Left colon (tissue), 2 donors: ENCODE measurements at regions of chr14 and their contacts with region 1.

Region 1: DNA sequence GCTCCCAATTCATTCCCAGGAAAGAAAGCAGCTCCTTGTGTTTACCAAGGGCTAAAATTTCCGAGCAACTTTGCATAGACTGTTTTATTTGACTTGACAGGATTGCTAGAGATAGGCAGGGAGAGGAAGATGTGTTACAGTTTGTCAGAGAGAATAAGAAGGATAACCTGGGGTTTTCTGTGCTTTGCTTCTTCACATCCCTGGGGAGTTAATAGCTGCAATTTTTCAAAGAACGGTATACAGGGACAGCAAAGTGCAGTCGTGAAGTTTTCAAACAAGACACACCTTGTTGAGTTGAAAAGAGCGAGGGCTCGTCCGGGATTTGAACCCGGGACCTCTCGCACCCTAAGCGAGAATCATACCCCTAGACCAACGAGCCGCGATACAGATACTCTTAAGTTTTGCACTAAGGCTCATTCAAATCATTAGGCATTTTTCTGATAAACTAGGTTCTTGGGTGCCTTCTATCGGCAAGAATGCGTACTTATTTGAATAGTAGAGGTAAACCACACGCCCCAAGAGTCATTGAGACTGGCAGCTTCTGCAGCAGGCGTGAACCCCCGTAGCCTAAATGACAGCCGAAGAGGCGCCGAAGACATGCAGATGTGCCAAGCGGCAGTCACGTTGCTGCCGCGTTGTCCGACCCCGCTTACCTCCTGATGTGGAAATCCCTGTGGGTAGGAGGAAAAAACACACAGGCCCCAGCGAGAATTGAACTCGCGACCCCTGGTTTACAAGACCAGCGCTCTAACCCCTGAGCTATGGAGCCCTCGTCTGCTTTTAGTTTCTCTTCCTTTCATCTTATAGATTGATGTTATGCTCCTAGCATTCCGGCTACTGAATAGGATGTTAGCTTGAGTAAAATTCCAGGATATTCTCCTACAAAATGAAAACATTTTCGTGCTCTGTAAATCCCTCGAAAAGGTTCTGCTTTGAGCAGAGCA is 22.2 kb upstream of the RNASE12 start:
- DNase-seq: peak; percentile 76
- ATAC-seq: peak; percentile 72

Region 2: GRCh38 chr14:20327005-20327869 is 286.1 kb before region 1 on chr14:
- intact Hi-C with region 1: loop called in 1 of 2 experiments (anchors 5 kb)
- DNase-seq: no peak
- ATAC-seq: peak; percentile 65

Region 3: GRCh38 chr14:20413045-20413799 is 200.1 kb before region 1 on chr14 and contains the start of gene TEP1:
- intact Hi-C with region 1: loop called in 1 of 2 experiments (anchors 10 kb)
- DNase-seq: peak; percentile 92 to 95
- ATAC-seq: peak; percentile 76
- total RNA-seq, gene TEP1: 72.1 to 74.3 TPM

Region 4: DNA sequence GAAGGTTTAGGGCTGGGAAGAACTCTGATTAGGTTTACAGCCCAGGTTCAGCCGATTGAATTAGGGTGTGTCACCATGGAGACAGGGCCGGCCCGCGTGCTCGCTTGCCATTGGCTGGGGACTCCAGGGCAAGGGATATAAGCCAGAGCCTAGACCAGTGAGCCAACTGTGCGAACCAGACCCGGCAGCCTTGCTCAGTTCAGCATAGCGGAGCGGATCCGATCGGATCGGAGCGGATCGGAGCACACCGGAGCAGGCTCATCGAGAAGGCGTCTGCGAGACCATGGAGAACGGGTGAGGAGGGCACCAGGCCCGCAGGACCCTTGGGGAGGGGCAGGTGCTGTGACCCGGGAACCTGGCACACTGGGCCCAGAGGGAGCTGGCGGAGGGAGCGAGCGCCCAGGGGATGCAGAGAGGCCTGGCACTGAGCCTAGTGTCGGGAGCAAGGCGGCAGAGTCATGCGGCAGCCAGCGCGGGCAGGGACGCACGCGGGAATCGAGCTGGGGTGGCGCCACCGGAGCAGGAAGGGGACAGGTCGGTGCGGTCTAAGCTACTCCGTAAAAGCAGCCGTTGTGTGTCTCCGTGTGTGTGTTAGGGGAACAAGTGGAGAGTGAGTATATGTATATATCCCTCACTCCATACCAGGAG is 144.0 kb before region 1 on chr14 and contains the start of gene PNP:
- intact Hi-C with region 1: loop called in 1 of 2 experiments (anchors 5 kb)
- DNase-seq: peak; percentile 93 to 96
- ATAC-seq: peak; percentile 91
- total RNA-seq, gene PNP: 66.9 to 93.6 TPM

Region 5: DNA sequence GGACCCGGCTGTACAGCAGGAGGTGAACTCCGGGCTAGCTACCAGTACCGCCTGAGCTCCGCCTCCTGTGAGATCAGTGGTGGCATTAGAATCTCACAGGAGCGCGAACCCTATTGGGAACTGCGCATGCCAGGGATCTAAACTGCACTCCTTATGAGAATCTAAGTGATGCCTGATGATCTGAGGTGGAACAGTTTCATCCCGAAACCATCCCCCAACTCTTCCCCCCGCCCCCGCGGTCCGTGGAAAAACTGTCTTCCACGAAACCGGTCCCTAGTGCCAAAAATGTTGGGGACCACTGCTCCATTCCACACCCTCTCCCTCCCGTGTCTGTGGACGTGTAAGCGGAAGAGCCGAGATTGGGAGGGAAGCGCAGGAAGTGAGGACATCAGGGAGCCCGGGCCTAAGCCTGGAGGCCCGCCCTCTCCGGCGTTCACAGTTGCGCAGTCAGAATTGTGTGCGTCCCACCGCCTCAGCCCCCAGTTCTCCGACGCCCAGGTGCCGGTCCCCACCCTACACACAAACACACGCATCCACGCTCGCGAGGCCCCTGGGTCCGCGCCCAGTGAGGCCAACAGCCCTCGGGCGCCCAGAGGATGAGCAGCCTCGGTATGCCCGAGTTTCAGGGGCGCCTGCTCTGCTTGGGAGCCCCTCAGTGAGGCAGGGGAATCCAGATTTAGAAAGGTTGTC is 69.2 kb after region 1 on chr14:
- intact Hi-C with region 1: loop called in 1 of 2 experiments (anchors 10 kb)
- DNase-seq: peak; percentile 88 to 91
- ATAC-seq: peak; percentile 54

Region 6: GRCh38 chr14:20690848-20691523 is 77.6 kb after region 1 on chr14:
- intact Hi-C with region 1: loop called (anchors 2 to 10 kb)
- DNase-seq: peak in 1 of 2 donors; percentile 32
- ATAC-seq: peak; percentile 49

Region 7: GRCh38 chr14:20732979-20733635 is 119.7 kb after region 1 on chr14:
- intact Hi-C with region 1: no loop called
- DNase-seq: no peak
- ATAC-seq: no peak

Region 8: DNA sequence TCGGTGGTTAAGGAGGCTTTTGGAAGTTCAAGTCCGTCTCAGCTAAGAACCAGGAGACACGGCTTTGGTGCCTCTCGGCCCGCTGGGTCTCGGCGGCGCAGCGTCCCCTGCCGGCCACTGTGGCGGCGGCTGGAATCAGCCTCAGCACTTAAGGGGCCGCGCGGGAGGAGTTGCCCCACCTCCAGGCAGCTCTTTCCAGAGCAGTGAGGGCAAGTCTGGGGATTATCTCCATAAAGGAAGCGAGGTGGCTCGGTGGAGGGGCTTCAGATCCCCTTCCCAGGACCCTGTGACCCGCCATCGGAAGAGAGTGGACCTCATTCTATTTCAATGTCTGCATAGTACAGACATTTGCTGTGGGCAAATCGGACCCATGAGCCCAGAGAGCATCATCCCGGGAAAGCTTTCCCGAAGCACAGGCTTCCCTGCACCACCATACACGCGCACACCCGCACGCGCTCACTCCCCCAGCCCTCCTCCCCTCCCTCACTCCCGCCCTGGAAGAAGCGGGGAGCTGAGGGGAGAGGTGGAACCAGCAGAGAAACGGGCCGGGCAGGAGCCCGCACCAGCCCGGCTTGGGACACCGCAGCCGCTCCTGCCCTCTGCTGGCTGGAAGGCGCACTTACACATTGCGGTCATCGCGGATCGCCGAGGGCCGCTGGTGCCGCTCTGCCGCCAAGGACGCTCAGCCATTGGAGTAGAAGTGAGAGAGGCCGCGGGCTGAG is 357.8 kb after region 1 on chr14:
- intact Hi-C with region 1: loop called in 1 of 2 experiments (anchors 10 kb)
- DNase-seq: peak; percentile 75 to 81
- ATAC-seq: peak; percentile 97